ENCODE measurements at regions of chr1 and their contacts with region 1.

Region 1: GRCh38 chr1:199684686-199685273 is 342.7 kb upstream of the NR5A2 start:
- DNase-seq: peak; percentile 61
- ATAC-seq: peak; percentile 93
- H3K4me3 ChIP-seq: no peak overlapping the region
- H3K27ac ChIP-seq: peak overlapping the region; percentile 44
- H3K4me1 ChIP-seq: peaks cover 28% of the 10 kb centered on the region
- H3K27me3 ChIP-seq: no peaks in the 10 kb centered on the region
- CTCF ChIP-seq: peak; percentile 81

Region 2: GRCh38 chr1:200040481-200041138 is 355.8 kb after region 1 on chr1:
- CTCF ChIA-PET with region 1: no interaction called
- POLR2A ChIA-PET with region 1: interaction called, 7 read pairs
- in situ Hi-C with region 1: no loop called
- intact Hi-C with region 1: loop called (anchors 10 kb)
- DNase-seq: no peak
- ATAC-seq: peak; percentile 46
- H3K4me3 ChIP-seq: peak overlapping the region; percentile 59 to 75
- H3K27ac ChIP-seq: peak overlapping the region; percentile 85
- H3K4me1 ChIP-seq: 0 out of 2 replicates have a peak, but pooled peaks cover 5% of the 10 kb centered on the region
- H3K27me3 ChIP-seq: peaks cover 5% of the 10 kb centered on the region
- CTCF ChIP-seq: no peak

Region 3: DNA sequence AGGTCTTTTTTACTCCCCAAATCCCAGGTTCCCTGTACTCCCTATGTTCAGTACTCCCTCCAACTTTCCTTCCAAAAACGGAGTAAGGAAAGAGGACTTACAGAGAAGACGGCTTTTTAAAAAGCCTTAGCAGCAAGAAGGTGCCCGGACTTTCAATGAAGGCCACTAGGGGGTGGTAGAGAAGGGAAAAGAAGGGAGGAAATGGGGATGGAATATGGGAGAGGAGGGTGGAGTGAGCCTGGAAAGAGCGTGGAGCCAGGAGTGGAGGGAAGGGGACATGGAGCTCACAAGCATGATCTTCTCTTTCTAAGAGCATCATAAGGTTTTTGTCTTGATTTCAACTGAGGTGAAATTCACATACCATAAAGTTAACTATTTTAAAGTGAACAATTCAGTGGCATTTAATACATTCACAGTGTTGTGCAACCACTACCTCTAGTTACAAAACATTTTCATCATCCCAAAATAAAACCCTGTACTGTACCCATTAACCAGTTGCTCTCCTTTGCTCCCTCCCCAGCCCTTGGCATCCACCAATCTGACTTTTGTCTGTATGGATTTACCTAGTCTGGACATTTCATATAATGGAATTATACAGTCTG is 595.1 kb after region 1 on chr1:
- CTCF ChIA-PET with region 1: no interaction called
- POLR2A ChIA-PET with region 1: no interaction called
- in situ Hi-C with region 1: no loop called
- intact Hi-C with region 1: loop called (anchors 10 kb)
- DNase-seq: no peak
- ATAC-seq: peak; percentile 86
- H3K4me3 ChIP-seq: no peak overlapping the region
- H3K27ac ChIP-seq: no peak overlapping the region
- H3K4me1 ChIP-seq: no peaks in the 10 kb centered on the region
- H3K27me3 ChIP-seq: no peaks in the 10 kb centered on the region
- CTCF ChIP-seq: peak; percentile 82

Region 4: DNA sequence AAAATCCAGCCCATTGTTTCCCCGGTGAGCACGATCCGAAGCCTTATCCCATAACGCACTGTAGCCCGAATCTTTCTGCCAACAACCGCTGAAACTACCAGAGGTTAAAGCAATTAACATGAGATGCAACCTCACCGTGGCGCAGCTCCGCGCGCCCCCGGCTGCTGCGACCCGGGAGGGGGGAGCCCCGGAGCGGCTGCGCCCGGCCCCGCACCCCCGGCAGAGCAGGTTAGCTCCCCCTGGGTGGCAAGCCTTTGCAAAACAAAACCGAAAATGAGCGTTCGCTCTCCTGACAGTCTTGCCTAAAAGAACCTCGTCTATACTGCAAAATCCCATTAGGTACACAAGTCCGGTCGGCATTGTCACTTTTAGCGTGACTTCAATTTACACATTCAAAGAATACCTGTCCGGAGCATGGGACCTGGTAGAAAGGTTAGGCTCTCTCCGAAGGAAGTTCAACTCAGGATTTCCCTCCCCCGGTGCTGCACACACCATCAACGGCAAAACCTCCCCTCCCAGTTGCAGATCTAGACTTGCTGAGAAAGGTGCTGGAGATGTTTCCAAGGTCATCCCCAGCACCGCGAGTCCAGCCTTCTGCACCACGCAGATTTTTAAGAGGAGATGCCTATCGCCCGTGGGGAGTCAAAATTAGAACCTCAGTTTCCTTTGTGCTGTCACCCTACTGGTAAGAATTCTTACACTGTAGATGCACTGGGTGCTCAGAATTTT is 617.6 kb after region 1 on chr1:
- CTCF ChIA-PET with region 1: no interaction called
- POLR2A ChIA-PET with region 1: no interaction called
- in situ Hi-C with region 1: no loop called
- intact Hi-C with region 1: loop called (anchors 10 kb)
- DNase-seq: no peak
- ATAC-seq: peak; percentile 84
- H3K4me3 ChIP-seq: peak overlapping the region; percentile 70 to 85
- H3K27ac ChIP-seq: peak overlapping the region; percentile 70
- H3K4me1 ChIP-seq: peaks cover 7% of the 10 kb centered on the region; the same call in 1 of the 2 replicates
- H3K27me3 ChIP-seq: no peaks in the 10 kb centered on the region
- CTCF ChIP-seq: no peak; the same call in 1 of the 2 replicates

Region 5: GRCh38 chr1:200488375-200489165 is 803.8 kb after region 1 on chr1:
- CTCF ChIA-PET with region 1: interaction called, 6 read pairs
- POLR2A ChIA-PET with region 1: interaction called, 3 read pairs
- in situ Hi-C with region 1: no loop called
- intact Hi-C with region 1: loop called (anchors 10 kb)
- DNase-seq: peak; percentile 75
- ATAC-seq: peak; percentile 92
- H3K4me3 ChIP-seq: peak overlapping the region in 1 of 2 experiments; percentile 38; a peak in 2 of 4 replicates
- H3K27ac ChIP-seq: peak overlapping the region; percentile 69
- H3K4me1 ChIP-seq: peaks cover 16% of the 10 kb centered on the region
- H3K27me3 ChIP-seq: no peaks in the 10 kb centered on the region
- CTCF ChIP-seq: peak; percentile 84

Region 6: GRCh38 chr1:200510228-200510623 is 825.4 kb after region 1 on chr1:
- CTCF ChIA-PET with region 1: no interaction called
- POLR2A ChIA-PET with region 1: no interaction called
- in situ Hi-C with region 1: no loop called
- intact Hi-C with region 1: loop called (anchors 2 kb)
- DNase-seq: peak; percentile 82
- ATAC-seq: peak; percentile 94
- H3K4me3 ChIP-seq: no peak overlapping the region
- H3K27ac ChIP-seq: no peak overlapping the region
- H3K4me1 ChIP-seq: peaks cover 9% of the 10 kb centered on the region; the same call in 1 of the 2 replicates
- H3K27me3 ChIP-seq: peaks cover 3% of the 10 kb centered on the region; the same call in 1 of the 2 replicates
- CTCF ChIP-seq: peak; percentile 88